HCT116 (cell line): ENCODE measurements at regions of chr4 and their contacts with region 1.

Region 1: DNA sequence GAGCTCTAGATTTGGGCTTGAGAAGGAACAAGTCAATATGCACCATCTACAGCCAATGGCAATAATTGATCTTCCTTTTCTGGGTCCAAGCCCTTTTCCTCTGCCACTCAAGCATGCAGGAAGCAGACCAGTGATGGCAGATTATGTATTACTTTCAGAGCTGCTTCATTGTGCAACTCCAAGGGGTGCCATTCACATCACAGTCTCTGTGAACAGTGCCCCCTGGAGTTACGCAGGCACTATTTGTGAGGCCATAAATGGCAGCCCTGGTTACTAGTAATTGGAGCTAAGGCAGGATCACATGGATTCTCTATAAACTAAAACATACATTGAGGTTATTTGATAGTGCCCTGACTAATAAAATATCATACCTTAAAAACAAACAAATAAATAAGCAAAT is 313.4 kb upstream of the SLC7A11 start:
- DNase-seq: no peak
- ATAC-seq: peak; percentile 62
- H3K4me3 ChIP-seq: no peak overlapping the region
- H3K27ac ChIP-seq: no peak overlapping the region
- H3K4me1 ChIP-seq: 0 out of 4 replicates have a peak, but pooled peaks cover 0 to 4% of the 10 kb centered on the region in 2 experiments
- H3K27me3 ChIP-seq: no peaks in the 10 kb centered on the region
- CTCF ChIP-seq: peak; percentile 48 to 54 (median 52); a peak in 4 of 6 replicates
- POLR2A ChIP-seq: no peak
- RAD21 ChIP-seq: peak; percentile 50

Region 2: DNA sequence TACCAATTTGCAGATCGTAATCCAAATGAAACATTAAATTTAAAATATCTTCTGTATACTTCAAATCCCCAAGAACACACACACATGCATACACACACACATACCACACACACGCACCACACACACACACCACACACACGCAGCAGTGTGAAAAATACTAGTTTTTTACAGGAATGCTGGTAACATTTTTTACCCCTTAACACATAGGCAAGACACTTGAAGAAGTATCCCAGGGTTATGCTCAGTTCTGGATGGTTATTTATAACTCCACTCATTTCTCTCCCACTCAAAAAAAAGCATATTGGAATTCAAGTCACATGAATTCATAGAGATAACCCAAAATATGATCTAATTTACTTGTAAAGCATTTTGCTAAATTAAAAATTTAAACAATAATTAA is 12.1 kb after region 1 on chr4:
- CTCF ChIA-PET with region 1: interaction called, 16 read pairs
- POLR2A ChIA-PET with region 1: no interaction called
- RAD21 ChIA-PET with region 1: no interaction called
- intact Hi-C with region 1: no loop called
- DNase-seq: no peak
- ATAC-seq: no peak
- H3K4me3 ChIP-seq: no peak overlapping the region
- H3K27ac ChIP-seq: no peak overlapping the region
- H3K4me1 ChIP-seq: no peaks in the 10 kb centered on the region
- H3K27me3 ChIP-seq: no peaks in the 10 kb centered on the region
- CTCF ChIP-seq: no peak
- POLR2A ChIP-seq: no peak
- RAD21 ChIP-seq: no peak